HEK293 (cell line): ENCODE measurements at regions of chr10 and their contacts with region 1.

Region 1: DNA sequence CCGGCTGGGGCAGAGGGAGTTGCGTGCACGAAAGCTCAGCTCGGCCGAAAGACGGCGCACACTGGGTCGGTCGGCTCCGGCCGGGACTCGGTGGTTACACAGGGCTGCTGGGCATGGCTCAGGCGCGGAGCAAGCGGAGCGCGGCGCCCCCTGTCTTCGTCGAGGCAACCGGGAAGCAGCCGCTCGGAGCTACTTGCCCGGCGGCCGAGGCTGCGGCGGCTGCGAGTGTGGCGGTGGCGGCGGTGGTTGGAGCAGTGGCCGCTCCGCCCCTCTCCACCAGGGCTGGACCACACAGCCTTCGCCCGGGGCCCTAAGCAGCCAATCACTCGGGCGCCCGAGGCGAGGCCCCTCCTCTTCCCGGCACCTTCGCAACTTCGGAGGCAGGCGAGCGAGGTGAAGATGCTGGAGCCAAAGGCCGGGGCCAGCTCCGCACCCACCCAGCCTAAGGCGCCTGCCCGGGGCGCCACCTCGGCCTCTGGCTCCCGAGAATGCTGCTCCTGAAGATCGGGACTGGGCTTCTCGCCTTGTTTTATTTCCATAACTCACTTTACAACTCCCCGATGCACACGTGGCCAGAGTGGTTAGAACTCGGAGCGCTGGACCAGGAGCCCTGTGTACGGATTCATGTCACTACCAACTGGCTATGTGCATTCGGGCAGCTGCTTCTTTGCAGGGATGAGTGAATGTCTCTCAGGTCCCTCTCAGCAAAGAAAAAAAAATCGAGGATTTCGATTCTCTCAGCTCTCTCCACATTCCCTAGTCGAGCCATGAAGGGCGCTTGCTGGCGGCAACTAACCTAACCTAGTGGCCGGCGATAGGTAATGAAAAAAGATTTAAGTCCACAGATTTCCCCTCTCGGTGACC is at the start of gene TLL2:
- H3K4me3 ChIP-seq: peak within 1 kb of the TSS; percentile 46
- H3K27ac ChIP-seq: peak within 1 kb of the TSS; percentile 42; the same call in 1 of the 2 replicates
- H3K4me1 ChIP-seq: peaks cover 5% of the 10 kb centered on the region
- CTCF ChIP-seq: peak; percentile 99

Region 2: GRCh38 chr10:96366502-96366901 is 147.4 kb before region 1 on chr10:
- CTCF ChIA-PET with region 1: interaction called, 21 read pairs
- POLR2A ChIA-PET with region 1: no interaction called
- H3K4me3 ChIP-seq: no peak overlapping the region
- H3K27ac ChIP-seq: no peak overlapping the region
- H3K4me1 ChIP-seq: no peaks in the 10 kb centered on the region
- CTCF ChIP-seq: no peak

Region 3: GRCh38 chr10:96374985-96375830 is 138.7 kb before region 1 on chr10:
- CTCF ChIA-PET with region 1: interaction called, 21 read pairs
- POLR2A ChIA-PET with region 1: interaction called, 3 read pairs
- H3K4me3 ChIP-seq: peak overlapping the region; percentile 26
- H3K27ac ChIP-seq: no peak overlapping the region; the same call in 1 of the 2 replicates
- H3K4me1 ChIP-seq: no peaks in the 10 kb centered on the region
- CTCF ChIP-seq: peak; percentile 99

Region 4: GRCh38 chr10:96395931-96396877 is 117.7 kb before region 1 on chr10:
- CTCF ChIA-PET with region 1: interaction called, 79 read pairs
- POLR2A ChIA-PET with region 1: no interaction called
- H3K4me3 ChIP-seq: no peak overlapping the region
- H3K27ac ChIP-seq: no peak overlapping the region
- H3K4me1 ChIP-seq: no peaks in the 10 kb centered on the region
- CTCF ChIP-seq: peak; percentile 68

Region 5: GRCh38 chr10:96491299-96491698 is 22.6 kb before region 1 on chr10:
- CTCF ChIA-PET with region 1: interaction called, 32 read pairs
- POLR2A ChIA-PET with region 1: no interaction called
- H3K4me3 ChIP-seq: no peak overlapping the region
- H3K27ac ChIP-seq: no peak overlapping the region
- H3K4me1 ChIP-seq: no peaks in the 10 kb centered on the region
- CTCF ChIP-seq: no peak

Region 6: GRCh38 chr10:96496281-96496925 is 17.5 kb before region 1 on chr10:
- CTCF ChIA-PET with region 1: interaction called, 32 read pairs
- POLR2A ChIA-PET with region 1: no interaction called
- H3K4me3 ChIP-seq: no peak overlapping the region
- H3K27ac ChIP-seq: no peak overlapping the region
- H3K4me1 ChIP-seq: no peaks in the 10 kb centered on the region
- CTCF ChIP-seq: no peak

Region 7: DNA sequence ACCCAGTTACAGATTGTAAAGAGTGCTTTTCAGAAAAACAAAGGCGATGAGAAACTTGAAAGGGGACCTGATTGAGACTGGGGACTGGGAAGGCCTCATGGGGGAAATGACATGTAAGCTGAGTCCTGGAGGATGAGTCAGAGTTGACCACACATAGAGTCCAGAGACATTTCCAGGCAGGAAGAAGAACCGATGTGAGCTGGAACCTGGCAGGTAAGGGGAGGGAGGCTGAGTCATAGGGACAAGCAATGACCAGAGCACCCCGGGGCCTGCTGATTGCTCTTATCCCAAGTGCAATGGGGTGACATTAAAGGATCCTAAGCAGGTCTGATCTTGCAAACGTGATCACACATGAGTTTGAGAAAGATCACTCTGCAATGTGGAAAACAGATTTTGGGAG is 11.9 kb before region 1 on chr10:
- CTCF ChIA-PET with region 1: interaction called, 21 read pairs
- POLR2A ChIA-PET with region 1: no interaction called
- H3K4me3 ChIP-seq: no peak overlapping the region
- H3K27ac ChIP-seq: no peak overlapping the region
- H3K4me1 ChIP-seq: no peaks in the 10 kb centered on the region
- CTCF ChIP-seq: no peak

Region 8: GRCh38 chr10:96765406-96766240 is 251.7 kb after region 1 on chr10:
- CTCF ChIA-PET with region 1: no interaction called
- POLR2A ChIA-PET with region 1: no interaction called
- H3K4me3 ChIP-seq: no peak overlapping the region
- H3K27ac ChIP-seq: no peak overlapping the region
- H3K4me1 ChIP-seq: no peaks in the 10 kb centered on the region
- CTCF ChIP-seq: peak; percentile 63